IMR-90 (cell line): ENCODE measurements at regions of chr2 and their contacts with region 1.

Region 1: GRCh38 chr2:140586379-140586778 is 1544.4 kb downstream of the LRP1B start:
- DNase-seq: peak; percentile 30
- ATAC-seq: peak; percentile 74
- H3K4me3 ChIP-seq: no peak overlapping the region
- H3K27ac ChIP-seq: no peak overlapping the region
- H3K4me1 ChIP-seq: no peaks in the 10 kb centered on the region
- H3K27me3 ChIP-seq: no peaks in the 10 kb centered on the region
- CTCF ChIP-seq: peak; percentile 48
- POLR2A ChIP-seq: no peak
- RAD21 ChIP-seq: peak; percentile 50

Region 2: DNA sequence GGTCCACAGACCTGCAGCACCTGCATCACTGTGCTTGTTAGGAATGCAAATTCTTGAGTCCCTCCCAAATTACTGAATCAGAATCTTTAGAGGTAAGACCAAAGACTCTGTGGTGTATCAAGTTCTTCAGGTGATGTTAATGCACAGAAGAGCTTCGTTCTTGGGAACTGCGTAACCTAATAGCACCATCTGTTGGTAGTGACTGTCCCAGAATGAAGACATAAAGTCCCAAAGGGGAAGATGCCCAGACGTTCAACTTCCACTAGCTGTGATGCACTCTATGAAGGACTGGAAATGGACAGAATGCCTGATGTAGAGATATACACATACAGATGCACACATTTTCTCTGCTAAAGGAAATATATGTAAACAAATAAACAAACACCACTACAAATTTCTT is 968.4 kb after region 1 on chr2:
- CTCF ChIA-PET with region 1: no interaction called
- POLR2A ChIA-PET with region 1: no interaction called
- dilution Hi-C with region 1: no loop called
- in situ Hi-C with region 1: no loop called
- intact Hi-C with region 1: loop called (anchors 5 kb)
- DNase-seq: peak; percentile 55
- ATAC-seq: peak; percentile 74
- H3K4me3 ChIP-seq: no peak overlapping the region
- H3K27ac ChIP-seq: no peak overlapping the region
- H3K4me1 ChIP-seq: no peaks in the 10 kb centered on the region
- H3K27me3 ChIP-seq: no peaks in the 10 kb centered on the region
- CTCF ChIP-seq: peak; percentile 67
- POLR2A ChIP-seq: no peak
- RAD21 ChIP-seq: peak; percentile 81